Activated CD4-positive, alpha-beta T cell treated with anti-CD3 and anti-CD28 coated beads, Interleukin-2, amount 10 ng/mL, durations not matched to agents 24 days and 14 days (primary cell): ENCODE measurements at regions of chr7 and their contacts with region 1.

Region 1: GRCh38 chr7:43679210-43680068 is 49.9 kb downstream of the COA1 start:
- DNase-seq: no peak
- H3K4me3 Mint-ChIP-seq: peak overlapping the region; percentile 34
- H3K27ac Mint-ChIP-seq: peak overlapping the region; percentile 66
- H3K4me1 Mint-ChIP-seq: peaks cover 43% of the 10 kb centered on the region
- H3K27me3 Mint-ChIP-seq: no peaks in the 10 kb centered on the region

Region 2: GRCh38 chr7:43516581-43517342 is 162.7 kb before region 1 on chr7:
- intact Hi-C with region 1: no loop called
- DNase-seq: no peak
- H3K4me3 Mint-ChIP-seq: no peak overlapping the region
- H3K27ac Mint-ChIP-seq: no peak overlapping the region
- H3K4me1 Mint-ChIP-seq: peaks cover 6% of the 10 kb centered on the region
- H3K27me3 Mint-ChIP-seq: peaks cover 14% of the 10 kb centered on the region

Region 3: GRCh38 chr7:43625980-43626379 is 53.5 kb before region 1 on chr7:
- intact Hi-C with region 1: no loop called
- DNase-seq: no peak
- H3K4me3 Mint-ChIP-seq: no peak overlapping the region
- H3K27ac Mint-ChIP-seq: peak overlapping the region; percentile 13
- H3K4me1 Mint-ChIP-seq: peaks cover 62% of the 10 kb centered on the region
- H3K27me3 Mint-ChIP-seq: no peaks in the 10 kb centered on the region

Region 4: GRCh38 chr7:43658718-43659548 is 20.5 kb before region 1 on chr7:
- intact Hi-C with region 1: loop called (anchors 1 kb)
- DNase-seq: peak; percentile 76
- H3K4me3 Mint-ChIP-seq: peak overlapping the region; percentile 55
- H3K27ac Mint-ChIP-seq: peak overlapping the region; percentile 93
- H3K4me1 Mint-ChIP-seq: peaks cover 44% of the 10 kb centered on the region
- H3K27me3 Mint-ChIP-seq: no peaks in the 10 kb centered on the region

Region 5: DNA sequence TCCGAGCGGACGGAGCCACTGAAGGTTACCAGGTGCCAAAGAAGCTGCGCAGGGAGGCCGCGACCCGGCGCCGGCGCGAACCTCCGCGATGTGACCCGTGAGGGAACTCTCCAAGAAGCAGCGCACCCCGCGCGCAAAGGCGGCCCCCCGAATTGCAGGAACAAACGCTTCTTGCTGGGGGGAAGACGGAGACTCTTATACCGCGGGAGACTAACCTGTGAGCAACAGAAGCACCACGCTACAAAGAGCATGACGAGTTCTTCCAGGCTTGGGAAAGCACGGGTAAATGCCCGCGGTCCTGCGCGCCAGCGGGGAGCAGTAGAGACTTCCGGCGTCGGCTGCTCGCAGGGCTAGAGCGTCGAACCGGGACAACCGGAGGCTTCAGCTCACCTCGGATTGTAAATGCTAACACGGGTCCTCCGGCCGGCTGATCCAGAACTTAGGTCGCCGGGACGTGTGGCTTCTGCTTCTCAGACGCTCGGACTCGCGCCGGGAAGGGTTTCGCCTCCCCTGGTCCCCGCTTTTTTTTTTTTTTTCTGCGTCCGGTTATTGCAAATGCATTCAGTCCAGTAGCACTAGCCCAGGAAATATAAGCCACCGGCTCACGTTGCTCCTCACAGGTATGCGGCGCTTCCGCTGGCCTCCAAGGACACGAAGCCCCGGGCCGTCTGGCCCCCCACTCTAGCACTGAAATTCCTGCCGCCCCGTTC is 49.9 kb after region 1 on chr7 and contains the start of gene COA1:
- intact Hi-C with region 1: loop called (anchors 2 kb)
- DNase-seq: peak; percentile 95
- H3K4me3 Mint-ChIP-seq: peak within 1 kb of the TSS; percentile 94
- H3K27ac Mint-ChIP-seq: peak within 1 kb of the TSS; percentile 89
- H3K4me1 Mint-ChIP-seq: peaks cover 26% of the 10 kb centered on the region
- H3K27me3 Mint-ChIP-seq: peaks cover 3% of the 10 kb centered on the region
- total RNA-seq, gene COA1: 79.0 and 79.3 TPM in 2 replicates